IMR-90 (cell line): ENCODE measurements at regions of chr17 and their contacts with region 1.

Region 1: DNA sequence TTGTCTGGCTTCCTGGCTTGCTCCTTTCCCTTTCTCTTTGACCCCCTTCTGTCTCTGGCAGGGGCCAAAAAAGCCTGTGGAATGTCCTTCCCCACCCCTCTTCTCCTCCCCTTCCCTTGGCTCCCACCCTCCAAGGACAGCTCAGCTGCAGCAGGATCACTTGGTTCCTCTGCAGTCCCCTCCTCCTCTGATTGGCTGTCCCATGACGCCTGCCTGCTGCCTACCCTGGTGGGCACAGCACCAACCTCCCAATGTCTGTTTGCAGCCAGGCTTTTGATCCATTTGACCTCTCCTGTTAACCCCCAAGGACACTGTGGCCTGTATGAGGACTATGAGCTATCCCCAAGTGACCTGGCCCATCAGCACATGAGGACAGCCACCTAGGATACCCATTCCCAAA is 14.8 kb upstream of the MTMR4 start:
- DNase-seq: no peak
- ATAC-seq: no peak
- H3K4me3 ChIP-seq: no peak overlapping the region
- H3K27ac ChIP-seq: no peak overlapping the region
- H3K4me1 ChIP-seq: peaks cover 18% of the 10 kb centered on the region
- H3K27me3 ChIP-seq: peaks cover 3% of the 10 kb centered on the region; the same call in 1 of the 2 replicates
- CTCF ChIP-seq: no peak
- POLR2A ChIP-seq: no peak
- RAD21 ChIP-seq: no peak

Region 2: GRCh38 chr17:58402047-58402446 is 127.2 kb before region 1 on chr17:
- CTCF ChIA-PET with region 1: no interaction called
- POLR2A ChIA-PET with region 1: interaction called, 17 read pairs
- dilution Hi-C with region 1: no loop called
- in situ Hi-C with region 1: no loop called
- intact Hi-C with region 1: no loop called
- DNase-seq: no peak
- ATAC-seq: no peak
- H3K4me3 ChIP-seq: no peak overlapping the region
- H3K27ac ChIP-seq: no peak overlapping the region
- H3K4me1 ChIP-seq: no peaks in the 10 kb centered on the region
- H3K27me3 ChIP-seq: peaks cover 1% of the 10 kb centered on the region; the same call in 1 of the 2 replicates
- CTCF ChIP-seq: no peak
- POLR2A ChIP-seq: no peak
- RAD21 ChIP-seq: no peak

Region 3: GRCh38 chr17:58571242-58572144 is 42.2 kb after region 1 on chr17:
- CTCF ChIA-PET with region 1: interaction called, 10 read pairs
- POLR2A ChIA-PET with region 1: no interaction called
- dilution Hi-C with region 1: no loop called
- in situ Hi-C with region 1: no loop called
- intact Hi-C with region 1: no loop called
- DNase-seq: no peak
- ATAC-seq: no peak
- H3K4me3 ChIP-seq: no peak overlapping the region
- H3K27ac ChIP-seq: no peak overlapping the region
- H3K4me1 ChIP-seq: 0 out of 2 replicates have a peak, but pooled peaks cover 2% of the 10 kb centered on the region
- H3K27me3 ChIP-seq: peaks cover 8% of the 10 kb centered on the region
- CTCF ChIP-seq: no peak
- POLR2A ChIP-seq: no peak
- RAD21 ChIP-seq: no peak